ENCODE measurements at regions of chr1 and their contacts with region 1.

Region 1: GRCh38 chr1:11645670-11646265 is 8.5 kb downstream of the FBXO2 start:
- DNase-seq: peak; percentile 83 to 93 (median 89)
- H3K4me3 ChIP-seq: no peak overlapping the region
- H3K27ac ChIP-seq: peak overlapping the region in 32 of 59 donors; percentile 3 to 98 (median 85)
- H3K27me3 ChIP-seq: no peaks in the 10 kb centered on the region
- CTCF ChIP-seq: peak; percentile 45 to 90 (median 82)

Region 2: GRCh38 chr1:11248155-11248554 is 397.6 kb before region 1 on chr1:
- intact Hi-C with region 1: loop called in 1 of 2 experiments (anchors 5 kb)
- DNase-seq: no peak
- H3K4me3 ChIP-seq: no peak overlapping the region
- H3K27ac ChIP-seq: peak overlapping the region in 1 of 59 donors; percentile 10
- H3K27me3 ChIP-seq: no peaks in the 10 kb centered on the region
- CTCF ChIP-seq: no peak

Region 3: GRCh38 chr1:11272832-11273594 is 372.8 kb before region 1 on chr1 and contains the start of gene UBIAD1:
- intact Hi-C with region 1: loop called in 1 of 2 experiments (anchors 5 kb)
- DNase-seq: peak; percentile 64 to 87 (median 76)
- H3K4me3 ChIP-seq: peak within 1 kb of the TSS; percentile 64 to 99 (median 92)
- H3K27ac ChIP-seq: peak within 1 kb of the TSS; percentile 67 to 96 (median 90)
- H3K27me3 ChIP-seq: no peaks in the 10 kb centered on the region
- CTCF ChIP-seq: peak in 34 of 56 donors; percentile 1 to 62 (median 36)
- total RNA-seq, gene UBIAD1: 11.4 to 28.1 (median 18.2) TPM

Region 4: DNA sequence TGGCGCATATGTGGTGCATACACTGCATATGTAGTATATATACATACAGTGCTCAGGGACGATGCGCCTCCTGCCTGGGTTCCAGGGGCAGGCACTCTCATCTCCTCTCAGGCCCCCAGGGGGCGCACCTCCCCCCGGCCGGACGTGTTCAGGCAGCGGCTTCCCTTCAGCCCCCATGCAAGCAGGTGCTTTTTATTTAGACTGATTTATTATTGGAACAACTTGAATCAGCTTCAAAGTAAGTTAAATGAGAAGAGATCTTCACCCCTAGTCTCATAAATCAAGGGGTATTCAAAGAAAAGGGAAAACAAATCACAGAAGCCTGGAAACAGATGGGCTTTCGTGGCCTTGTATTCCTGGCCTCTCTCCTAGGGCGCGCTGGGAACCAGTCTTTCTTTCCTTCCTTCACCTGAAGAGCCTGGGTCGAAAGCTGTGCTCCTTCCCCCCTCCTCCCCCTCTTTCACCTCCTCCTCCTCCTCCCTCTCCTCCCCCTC is 308.1 kb before region 1 on chr1:
- intact Hi-C with region 1: loop called in 1 of 2 experiments (anchors 5 kb)
- DNase-seq: peak in 5 of 10 donors; percentile 42 to 61 (median 47)
- H3K4me3 ChIP-seq: no peak overlapping the region
- H3K27ac ChIP-seq: no peak overlapping the region
- H3K27me3 ChIP-seq: no peaks in the 10 kb centered on the region
- CTCF ChIP-seq: peak; percentile 41 to 81 (median 68)

Region 5: GRCh38 chr1:11719313-11720032 is 73.7 kb after region 1 on chr1:
- intact Hi-C with region 1: loop called (anchors 2 to 5 kb)
- DNase-seq: peak; percentile 84 to 93 (median 88)
- H3K4me3 ChIP-seq: peak overlapping the region; percentile 20 to 69 (median 49)
- H3K27ac ChIP-seq: peak overlapping the region in 27 of 59 donors; percentile 4 to 75 (median 40)
- H3K27me3 ChIP-seq: no peaks in the 10 kb centered on the region
- CTCF ChIP-seq: peak; percentile 91 to 99 (median 97)

Measured in dorsolateral prefrontal cortex (tissue), 120 donors.